ENCODE measurements at regions of chr18 and their contacts with region 1.

Region 1: GRCh38 chr18:22337306-22337705 is 80.4 kb downstream of the CTAGE1 start:
- DNase-seq: no peak

Region 2: GRCh38 chr18:22185273-22185672 is 152.0 kb before region 1 on chr18:
- intact Hi-C with region 1: loop called in 1 of 2 experiments (anchors 5 kb)
- DNase-seq: no peak

Measured in posterior vena cava (tissue), 2 donors.